Prostate gland (tissue), 2 donors: ENCODE measurements at regions of chr9 and their contacts with region 1.

Region 1: DNA sequence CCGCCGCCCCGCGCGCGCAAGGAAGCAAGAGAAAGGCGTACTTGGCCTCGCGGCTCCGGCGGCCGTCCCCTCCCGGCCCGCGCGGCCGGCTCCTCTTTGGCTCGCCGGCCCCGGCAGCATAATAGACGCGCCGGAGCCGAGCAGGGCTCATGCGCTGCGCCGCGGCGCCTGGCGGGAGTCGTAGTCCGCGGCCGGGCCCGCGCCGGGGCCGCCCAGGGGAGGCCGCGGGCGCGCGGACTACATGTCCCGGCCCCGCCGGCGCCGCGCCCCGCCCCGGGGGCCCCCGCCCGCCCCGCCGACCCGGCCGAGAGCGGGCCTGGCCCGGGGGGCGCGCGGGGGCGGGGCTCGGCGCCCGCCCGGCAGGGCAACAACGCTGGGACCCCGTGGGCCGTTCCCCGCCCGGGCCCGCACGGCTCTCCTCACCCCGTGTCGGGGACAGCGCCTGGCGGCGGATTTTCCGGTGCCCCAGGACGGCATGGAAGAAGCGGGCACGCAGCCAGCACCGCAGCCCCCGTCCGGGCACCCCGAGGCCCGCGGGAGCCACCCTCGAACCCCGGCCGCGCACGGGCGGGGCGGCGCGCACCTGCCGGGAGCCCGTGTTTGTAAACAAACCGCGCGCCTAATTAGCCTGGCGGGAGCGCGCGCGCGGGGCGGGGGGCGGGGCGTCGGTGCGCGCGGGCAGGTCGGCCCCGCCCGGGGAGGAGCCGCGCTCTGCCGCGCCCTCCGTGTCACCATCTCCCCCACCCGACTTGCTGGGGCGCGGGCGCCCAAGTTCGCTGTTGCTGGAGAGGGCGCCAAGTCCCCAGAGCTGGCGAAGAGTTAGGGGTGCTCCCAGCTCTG is at the start of gene BRD3:
- DNase-seq: peak; percentile 83
- H3K4me3 ChIP-seq: peak within 1 kb of the TSS; percentile 93 to 95
- H3K27ac ChIP-seq: peak within 1 kb of the TSS; percentile 95 to 99
- H3K4me1 ChIP-seq: peaks cover 10% of the 10 kb centered on the region
- H3K27me3 ChIP-seq: no peaks in the 10 kb centered on the region
- CTCF ChIP-seq: no peak
- POLR2A ChIP-seq: peak; percentile 83
- total RNA-seq, gene BRD3: 31.8 to 44.3 TPM

Region 2: DNA sequence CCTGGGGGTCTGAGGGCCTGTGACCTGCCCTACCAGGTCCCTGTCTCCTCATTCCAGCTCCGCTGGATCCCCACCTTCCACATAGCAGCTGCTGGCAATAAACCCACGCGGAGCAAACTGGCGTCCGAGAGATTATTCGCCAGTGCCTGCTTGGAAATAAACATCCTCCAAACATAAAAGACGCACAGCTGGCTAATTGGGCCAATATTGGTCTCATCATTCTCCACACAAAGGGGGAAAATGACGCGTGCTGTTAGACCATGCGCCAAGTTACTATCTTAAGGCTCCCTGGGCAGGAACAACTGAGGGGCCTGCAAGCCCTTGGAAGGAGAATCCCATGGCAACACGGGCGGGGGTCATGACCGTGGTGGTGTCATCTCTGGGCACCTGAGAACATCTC is 256.7 kb before region 1 on chr9:
- intact Hi-C with region 1: no loop called
- DNase-seq: no peak
- H3K4me3 ChIP-seq: no peak overlapping the region
- H3K27ac ChIP-seq: no peak overlapping the region
- H3K4me1 ChIP-seq: no peaks in the 10 kb centered on the region
- H3K27me3 ChIP-seq: no peaks in the 10 kb centered on the region
- CTCF ChIP-seq: no peak
- POLR2A ChIP-seq: no peak

Region 3: GRCh38 chr9:134024828-134025605 is 43.1 kb before region 1 on chr9 and contains the start of gene BRD3OS:
- intact Hi-C with region 1: loop called (anchors 5 kb)
- DNase-seq: peak; percentile 95
- H3K4me3 ChIP-seq: peak within 1 kb of the TSS; percentile 94 to 95
- H3K27ac ChIP-seq: peak within 1 kb of the TSS; percentile 65 to 73
- H3K4me1 ChIP-seq: no peaks in the 10 kb centered on the region
- H3K27me3 ChIP-seq: no peaks in the 10 kb centered on the region
- CTCF ChIP-seq: no peak
- POLR2A ChIP-seq: peak; percentile 33
- total RNA-seq, gene BRD3OS: 16.2 to 30.1 TPM

Region 4: DNA sequence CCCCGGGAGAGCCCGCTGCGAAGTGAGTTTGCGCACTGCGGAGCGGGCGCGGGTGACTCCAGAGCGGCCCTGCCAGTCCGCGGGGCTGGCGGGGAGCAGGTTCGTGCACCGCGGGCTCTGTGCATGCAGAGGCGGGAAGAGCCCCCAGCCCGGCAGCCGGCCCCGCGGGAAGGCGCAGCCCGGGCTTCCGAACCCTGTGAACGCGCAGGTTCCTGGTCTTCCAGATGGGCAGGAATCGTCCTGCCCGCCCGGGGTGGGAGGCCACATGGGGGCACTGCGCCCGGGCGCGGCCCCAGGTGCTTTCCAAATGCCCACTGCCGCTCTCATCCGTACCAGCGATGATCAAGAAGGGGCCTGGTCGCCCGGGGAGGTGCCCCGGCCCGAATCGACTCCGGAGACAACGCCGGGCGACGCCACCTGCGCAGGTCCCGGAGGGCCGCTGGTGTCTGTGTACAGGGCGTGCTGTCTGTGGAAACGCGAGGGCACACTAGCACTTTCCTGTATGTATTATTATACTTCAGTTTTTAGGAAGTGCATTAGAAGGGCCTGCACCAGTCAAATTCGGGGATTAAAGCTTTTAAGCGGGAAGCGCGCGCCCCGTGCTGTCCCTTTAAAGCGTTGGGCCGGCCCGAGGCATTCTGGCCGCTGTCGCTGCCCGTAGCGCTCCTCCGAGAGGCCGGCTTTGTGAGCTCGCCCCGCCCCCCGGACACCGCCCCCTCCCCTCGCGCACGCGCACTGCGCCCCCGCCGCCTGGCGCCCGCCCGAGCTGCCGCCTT is 67.4 kb after region 1 on chr9 and contains the start of gene WDR5:
- intact Hi-C with region 1: loop called (anchors 5 kb)
- DNase-seq: peak; percentile 92
- H3K4me3 ChIP-seq: peak within 1 kb of the TSS; percentile 66 to 78
- H3K27ac ChIP-seq: peak within 1 kb of the TSS; percentile 86 to 92
- H3K4me1 ChIP-seq: peaks cover 36% of the 10 kb centered on the region
- H3K27me3 ChIP-seq: no peaks in the 10 kb centered on the region
- CTCF ChIP-seq: peak in 2 of 4 experiments; percentile 21 to 23
- POLR2A ChIP-seq: peak; percentile 39
- total RNA-seq, gene WDR5: 28.6 to 67.9 TPM

Region 5: GRCh38 chr9:134434894-134435506 is 366.9 kb after region 1 on chr9:
- intact Hi-C with region 1: loop called (anchors 10 kb)
- DNase-seq: peak; percentile 97
- H3K4me3 ChIP-seq: no peak overlapping the region
- H3K27ac ChIP-seq: peak overlapping the region; percentile 94 to 96
- H3K4me1 ChIP-seq: peaks cover 49% of the 10 kb centered on the region
- H3K27me3 ChIP-seq: no peaks in the 10 kb centered on the region
- CTCF ChIP-seq: no peak
- POLR2A ChIP-seq: peak; percentile 24